ENCODE measurements at regions of chr7 and their contacts with region 1.

Region 1: GRCh38 chr7:134669845-134670373 is 23.3 kb downstream of the BPGM start:
- DNase-seq: peak; percentile 87
- H3K4me3 Mint-ChIP-seq: peak overlapping the region; percentile 27
- H3K27ac Mint-ChIP-seq: peak overlapping the region; percentile 74
- H3K4me1 Mint-ChIP-seq: peaks cover 48% of the 10 kb centered on the region
- H3K27me3 Mint-ChIP-seq: no peaks in the 10 kb centered on the region

Region 2: GRCh38 chr7:134254311-134254710 is 415.6 kb before region 1 on chr7:
- CTCF ChIA-PET with region 1: no interaction called
- POLR2A ChIA-PET with region 1: no interaction called
- intact Hi-C with region 1: no loop called
- DNase-seq: no peak
- H3K4me3 Mint-ChIP-seq: no peak overlapping the region
- H3K27ac Mint-ChIP-seq: no peak overlapping the region
- H3K4me1 Mint-ChIP-seq: no peaks in the 10 kb centered on the region
- H3K27me3 Mint-ChIP-seq: no peaks in the 10 kb centered on the region

Region 3: GRCh38 chr7:134613623-134614347 is 56.1 kb before region 1 on chr7:
- CTCF ChIA-PET with region 1: no interaction called
- POLR2A ChIA-PET with region 1: no interaction called
- intact Hi-C with region 1: loop called (anchors 1 kb)
- DNase-seq: peak; percentile 61
- H3K4me3 Mint-ChIP-seq: no peak overlapping the region
- H3K27ac Mint-ChIP-seq: no peak overlapping the region
- H3K4me1 Mint-ChIP-seq: peaks cover 12% of the 10 kb centered on the region
- H3K27me3 Mint-ChIP-seq: peaks cover 15% of the 10 kb centered on the region

Region 4: DNA sequence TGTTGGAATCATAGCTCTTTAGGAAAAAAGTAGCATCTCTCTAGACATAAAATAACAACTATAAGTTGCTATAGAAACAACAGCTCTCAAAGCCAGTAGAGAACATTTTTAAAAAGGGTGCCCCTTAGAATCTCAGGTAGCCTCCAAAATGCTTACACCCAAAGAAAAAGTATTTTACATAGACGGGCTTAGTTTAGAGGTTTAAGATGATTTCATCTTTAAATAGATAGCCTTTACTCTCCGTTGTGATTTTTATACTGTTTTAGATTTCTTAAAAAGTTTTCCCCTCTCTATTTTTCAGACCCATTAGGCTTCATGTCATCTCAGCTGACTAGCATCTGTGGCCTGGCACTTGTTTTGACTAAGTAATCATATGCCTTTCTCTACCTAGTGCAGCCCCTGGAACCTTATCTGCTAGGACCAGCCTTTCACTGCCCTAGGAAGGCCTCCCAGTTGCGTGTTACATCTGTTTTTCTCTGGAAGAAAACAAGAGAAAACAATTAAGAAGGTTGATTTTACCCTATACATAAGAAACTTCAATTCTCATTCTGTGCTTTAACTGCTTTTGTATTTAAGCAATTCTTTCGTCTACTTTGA is 30.1 kb before region 1 on chr7:
- CTCF ChIA-PET with region 1: no interaction called
- POLR2A ChIA-PET with region 1: no interaction called
- intact Hi-C with region 1: no loop called
- DNase-seq: no peak
- H3K4me3 Mint-ChIP-seq: no peak overlapping the region
- H3K27ac Mint-ChIP-seq: no peak overlapping the region
- H3K4me1 Mint-ChIP-seq: peaks cover 49% of the 10 kb centered on the region
- H3K27me3 Mint-ChIP-seq: no peaks in the 10 kb centered on the region

Region 5: DNA sequence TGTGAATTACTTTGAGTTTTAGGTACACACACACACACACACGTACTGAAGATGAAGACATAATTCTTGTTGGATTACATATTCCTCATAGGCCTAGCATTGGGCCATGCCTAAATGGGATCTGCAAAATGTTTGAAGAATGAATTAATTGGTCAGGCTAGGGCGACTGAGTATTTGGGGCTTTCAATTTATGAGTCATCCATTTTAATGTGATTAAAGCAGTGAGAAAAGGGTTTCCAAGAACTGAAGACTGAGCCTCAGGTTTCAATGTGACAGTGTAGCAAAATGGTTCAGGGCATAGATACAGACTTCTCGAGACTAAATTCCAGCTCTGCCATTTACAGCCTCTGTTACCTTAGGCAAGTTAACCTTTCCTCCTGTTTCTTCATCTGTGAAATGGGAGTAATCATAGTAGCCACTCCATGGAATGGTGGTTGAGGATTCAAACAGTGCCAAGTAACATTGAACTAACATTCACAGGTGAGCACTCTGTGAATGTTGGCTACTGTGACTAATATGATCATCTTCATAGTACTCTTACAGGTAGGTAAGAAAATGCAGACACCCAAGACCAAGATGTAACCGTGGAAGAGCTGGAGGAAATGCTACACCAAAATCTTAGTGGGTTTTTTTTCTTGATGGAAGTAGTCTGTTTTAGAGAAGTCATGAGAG is 15.7 kb before region 1 on chr7:
- CTCF ChIA-PET with region 1: no interaction called
- POLR2A ChIA-PET with region 1: no interaction called
- intact Hi-C with region 1: loop called (anchors 1 kb)
- DNase-seq: no peak
- H3K4me3 Mint-ChIP-seq: no peak overlapping the region
- H3K27ac Mint-ChIP-seq: peak overlapping the region; percentile 74
- H3K4me1 Mint-ChIP-seq: peaks cover 42% of the 10 kb centered on the region
- H3K27me3 Mint-ChIP-seq: no peaks in the 10 kb centered on the region

Region 6: DNA sequence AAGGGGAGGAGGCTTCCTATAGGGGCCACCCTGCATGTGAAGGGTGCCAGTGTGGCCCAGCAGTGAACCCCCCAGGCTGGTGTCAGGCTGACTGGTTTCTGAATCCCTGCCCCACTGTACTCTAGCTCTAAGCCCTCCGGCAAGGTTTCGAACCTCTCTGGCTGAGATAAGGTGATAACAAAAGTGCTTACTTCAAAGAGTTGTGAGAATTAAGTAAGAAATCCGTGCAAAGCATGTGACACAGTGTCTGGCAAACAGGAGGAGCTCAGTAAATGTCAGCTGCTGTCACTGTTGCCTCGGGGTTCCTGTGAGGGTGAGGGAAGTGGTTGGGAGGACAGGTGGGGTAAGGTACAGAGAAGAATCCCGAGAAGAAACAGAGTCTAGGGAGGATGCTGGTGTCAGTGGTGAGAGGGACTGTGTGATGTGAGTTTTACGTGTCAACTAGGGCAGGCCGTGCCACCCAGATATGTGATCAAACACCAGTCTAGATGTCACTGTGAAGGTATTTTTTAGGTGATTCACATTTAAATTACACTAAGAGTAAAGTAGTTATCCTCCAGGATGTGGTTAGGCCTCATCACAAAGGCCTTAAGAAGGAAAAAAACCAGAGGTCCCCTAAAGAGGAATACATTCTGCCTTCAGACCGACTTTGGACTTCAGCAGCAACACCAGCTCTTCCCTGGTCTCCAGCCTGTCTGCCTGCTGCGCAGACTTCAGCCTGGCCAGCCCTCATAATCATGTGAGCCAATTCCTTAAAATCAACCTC is 41.1 kb after region 1 on chr7:
- CTCF ChIA-PET with region 1: no interaction called
- POLR2A ChIA-PET with region 1: no interaction called
- intact Hi-C with region 1: loop called (anchors 5 kb)
- DNase-seq: peak; percentile 78
- H3K4me3 Mint-ChIP-seq: peak overlapping the region; percentile 76
- H3K27ac Mint-ChIP-seq: peak overlapping the region; percentile 97
- H3K4me1 Mint-ChIP-seq: peaks cover 30% of the 10 kb centered on the region
- H3K27me3 Mint-ChIP-seq: no peaks in the 10 kb centered on the region

Region 7: GRCh38 chr7:135308583-135309327 is 638.8 kb after region 1 on chr7:
- CTCF ChIA-PET with region 1: no interaction called
- POLR2A ChIA-PET with region 1: no interaction called
- intact Hi-C with region 1: no loop called
- DNase-seq: no peak
- H3K4me3 Mint-ChIP-seq: no peak overlapping the region
- H3K27ac Mint-ChIP-seq: no peak overlapping the region
- H3K4me1 Mint-ChIP-seq: no peaks in the 10 kb centered on the region
- H3K27me3 Mint-ChIP-seq: no peaks in the 10 kb centered on the region